OCI-LY7 (cell line): ENCODE measurements at regions of chr1 and their contacts with region 1.

Region 1: DNA sequence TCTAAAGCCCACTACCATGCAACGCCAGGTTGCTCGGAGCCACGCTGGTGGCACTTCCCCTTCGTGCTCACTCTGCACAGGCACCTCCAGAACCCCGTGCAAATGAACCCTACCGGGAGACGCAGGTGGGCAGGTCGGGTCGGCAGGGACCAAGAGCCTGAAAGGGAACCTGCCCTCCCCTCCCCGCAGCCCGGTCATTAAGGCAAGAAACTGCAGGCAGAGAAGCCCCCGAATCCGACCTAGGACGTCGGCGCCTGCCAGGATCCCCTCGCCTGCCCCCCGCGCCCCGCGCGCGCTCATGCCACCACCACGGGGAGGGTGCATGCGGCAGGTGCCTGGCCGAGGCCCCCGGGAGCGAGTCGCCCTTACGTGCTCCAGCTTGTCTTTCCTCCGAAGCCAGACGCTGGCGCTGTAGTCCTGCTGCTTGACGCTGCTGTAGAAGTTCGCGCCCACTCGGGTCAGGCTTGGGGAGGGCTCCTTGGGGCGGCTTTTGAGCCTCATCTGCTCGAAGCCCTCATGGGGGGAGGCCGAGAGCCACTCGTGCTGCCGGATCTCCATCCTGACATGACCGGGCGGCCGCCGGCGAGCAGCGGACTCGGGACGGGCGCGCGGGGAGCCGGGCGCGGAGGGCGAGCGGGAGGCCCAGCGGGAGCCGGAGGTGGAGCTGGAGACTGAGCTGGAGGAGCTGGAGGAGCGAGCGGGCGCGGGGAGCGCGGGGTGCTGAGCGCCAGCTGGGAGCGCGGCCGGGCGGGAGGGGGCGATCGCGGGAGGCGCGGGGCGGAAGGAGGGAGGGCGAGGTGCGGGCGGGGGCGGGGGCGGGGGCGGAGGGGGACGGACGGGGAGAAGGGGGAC is 552 bp downstream of the PLD5 start:
- DNase-seq: no peak
- H3K4me3 ChIP-seq: no peak overlapping the region
- H3K27ac ChIP-seq: no peak overlapping the region
- H3K4me1 ChIP-seq: no peaks in the 10 kb centered on the region
- CTCF ChIP-seq: no peak

Region 2: DNA sequence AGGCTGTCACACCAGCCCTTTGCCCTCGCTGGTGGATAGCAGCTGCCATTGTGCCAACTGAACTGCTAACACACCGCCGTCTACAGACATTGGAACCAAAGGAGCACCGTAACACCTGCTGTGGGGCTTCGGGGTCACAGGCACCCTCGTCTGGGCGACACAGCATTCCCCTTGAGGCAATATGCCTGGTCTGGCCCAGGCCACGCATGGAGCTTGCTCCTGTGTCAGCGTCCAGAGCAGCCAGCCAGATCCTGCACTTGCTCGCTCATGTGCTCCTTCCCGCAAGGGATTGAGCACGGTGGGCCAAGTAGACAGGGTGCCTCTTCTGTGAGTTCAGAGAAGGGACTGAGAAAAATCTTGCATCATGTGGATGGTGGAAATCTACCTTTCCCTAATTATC is 315.2 kb after region 1 on chr1:
- CTCF ChIA-PET with region 1: no interaction called
- POLR2A ChIA-PET with region 1: interaction called, 10 read pairs
- intact Hi-C with region 1: no loop called
- DNase-seq: no peak
- H3K4me3 ChIP-seq: no peak overlapping the region
- H3K27ac ChIP-seq: no peak overlapping the region
- H3K4me1 ChIP-seq: no peaks in the 10 kb centered on the region
- CTCF ChIP-seq: no peak